Caco-2 (cell line): ENCODE measurements at regions of chr3 and their contacts with region 1.

Region 1: GRCh38 chr3:43759297-43759782 is 68.6 kb downstream of the ABHD5 start:
- DNase-seq: peak; percentile 64 to 80
- H3K4me3 ChIP-seq: no peak overlapping the region
- H3K4me3 Mint-ChIP-seq: peak overlapping the region; percentile 64
- H3K27ac Mint-ChIP-seq: peak overlapping the region; percentile 89
- H3K4me1 ChIP-seq: peaks cover 33% of the 10 kb centered on the region
- H3K4me1 Mint-ChIP-seq: peaks cover 31% of the 10 kb centered on the region
- H3K27me3 ChIP-seq: no peaks in the 10 kb centered on the region
- H3K27me3 Mint-ChIP-seq: no peaks in the 10 kb centered on the region
- CTCF ChIP-seq: peak in 1 of 2 experiments; percentile 27

Region 2: DNA sequence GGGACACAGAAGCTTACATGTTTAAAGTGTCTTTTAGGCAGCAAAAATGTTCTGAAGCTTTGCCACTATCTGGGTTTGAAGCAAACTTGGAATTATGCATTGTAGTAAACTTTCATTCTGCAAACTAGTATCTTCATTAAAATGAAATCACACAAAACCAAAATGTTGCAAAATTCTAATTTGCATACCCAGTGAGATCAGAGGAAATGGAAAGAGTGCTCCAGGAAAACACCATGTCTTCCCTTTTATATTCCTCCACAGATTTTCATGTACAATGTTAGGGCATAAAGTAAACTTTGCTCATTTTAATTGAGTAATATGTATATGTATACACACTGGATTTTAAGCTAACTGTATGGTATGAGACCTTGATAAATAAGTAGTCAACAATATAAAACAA is 161.4 kb before region 1 on chr3:
- CTCF ChIA-PET with region 1: no interaction called
- POLR2A ChIA-PET with region 1: no interaction called
- intact Hi-C with region 1: no loop called
- DNase-seq: no peak
- H3K4me3 ChIP-seq: no peak overlapping the region
- H3K4me3 Mint-ChIP-seq: no peak overlapping the region
- H3K27ac Mint-ChIP-seq: no peak overlapping the region
- H3K4me1 ChIP-seq: no peaks in the 10 kb centered on the region
- H3K4me1 Mint-ChIP-seq: no peaks in the 10 kb centered on the region
- H3K27me3 ChIP-seq: no peaks in the 10 kb centered on the region
- H3K27me3 Mint-ChIP-seq: no peaks in the 10 kb centered on the region
- CTCF ChIP-seq: no peak

Region 3: DNA sequence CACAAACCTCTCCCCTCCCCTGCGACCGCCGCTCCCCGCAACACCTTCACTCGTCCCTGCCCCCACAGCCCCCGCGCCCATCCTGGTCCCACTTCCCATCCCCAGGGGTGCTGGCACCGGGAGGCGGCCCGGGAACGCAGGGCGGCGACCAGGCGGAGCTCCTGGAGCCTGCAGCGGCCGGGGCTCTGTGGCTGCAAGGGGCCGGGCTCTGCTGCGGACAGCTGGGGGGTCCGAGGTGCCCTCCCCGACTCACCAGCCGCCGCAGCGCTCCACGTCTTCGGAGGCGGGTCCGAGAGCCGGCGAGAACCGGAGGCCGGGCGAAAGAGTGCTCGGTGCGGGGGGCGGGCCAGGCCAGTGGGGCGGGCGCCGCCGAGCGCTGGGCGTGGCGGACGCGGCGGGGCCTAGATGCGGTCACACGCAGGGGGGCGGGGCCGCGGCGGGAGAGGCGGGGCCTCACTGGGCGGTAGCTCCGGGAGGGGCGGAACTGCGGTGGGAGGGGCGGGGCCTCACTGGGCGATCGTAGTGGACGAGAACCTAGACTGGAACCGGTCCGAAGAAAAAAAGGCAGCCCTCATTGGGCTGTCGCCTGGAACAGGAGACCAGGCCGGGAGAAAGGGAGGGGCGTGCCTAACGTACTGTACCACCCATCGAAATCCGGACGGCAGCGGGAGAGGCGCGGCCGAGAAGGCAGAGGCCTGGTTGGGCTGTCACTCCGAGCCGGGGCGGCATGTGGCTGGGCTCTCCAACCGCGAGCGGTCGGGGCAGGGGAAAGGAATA is 137.5 kb before region 1 on chr3 and contains the start of gene ANO10:
- CTCF ChIA-PET with region 1: no interaction called
- POLR2A ChIA-PET with region 1: no interaction called
- intact Hi-C with region 1: loop called (anchors 10 kb)
- DNase-seq: peak; percentile 98 to 99
- H3K4me3 ChIP-seq: peak within 1 kb of the TSS; percentile 80
- H3K4me3 Mint-ChIP-seq: peak within 1 kb of the TSS; percentile 95
- H3K27ac Mint-ChIP-seq: peak within 1 kb of the TSS; percentile 88
- H3K4me1 ChIP-seq: no peaks in the 10 kb centered on the region
- H3K4me1 Mint-ChIP-seq: no peaks in the 10 kb centered on the region
- H3K27me3 ChIP-seq: no peaks in the 10 kb centered on the region
- H3K27me3 Mint-ChIP-seq: no peaks in the 10 kb centered on the region
- CTCF ChIP-seq: no peak
- total RNA-seq, gene ANO10: 24.1 and 27.6 TPM in 2 replicates

Region 4: DNA sequence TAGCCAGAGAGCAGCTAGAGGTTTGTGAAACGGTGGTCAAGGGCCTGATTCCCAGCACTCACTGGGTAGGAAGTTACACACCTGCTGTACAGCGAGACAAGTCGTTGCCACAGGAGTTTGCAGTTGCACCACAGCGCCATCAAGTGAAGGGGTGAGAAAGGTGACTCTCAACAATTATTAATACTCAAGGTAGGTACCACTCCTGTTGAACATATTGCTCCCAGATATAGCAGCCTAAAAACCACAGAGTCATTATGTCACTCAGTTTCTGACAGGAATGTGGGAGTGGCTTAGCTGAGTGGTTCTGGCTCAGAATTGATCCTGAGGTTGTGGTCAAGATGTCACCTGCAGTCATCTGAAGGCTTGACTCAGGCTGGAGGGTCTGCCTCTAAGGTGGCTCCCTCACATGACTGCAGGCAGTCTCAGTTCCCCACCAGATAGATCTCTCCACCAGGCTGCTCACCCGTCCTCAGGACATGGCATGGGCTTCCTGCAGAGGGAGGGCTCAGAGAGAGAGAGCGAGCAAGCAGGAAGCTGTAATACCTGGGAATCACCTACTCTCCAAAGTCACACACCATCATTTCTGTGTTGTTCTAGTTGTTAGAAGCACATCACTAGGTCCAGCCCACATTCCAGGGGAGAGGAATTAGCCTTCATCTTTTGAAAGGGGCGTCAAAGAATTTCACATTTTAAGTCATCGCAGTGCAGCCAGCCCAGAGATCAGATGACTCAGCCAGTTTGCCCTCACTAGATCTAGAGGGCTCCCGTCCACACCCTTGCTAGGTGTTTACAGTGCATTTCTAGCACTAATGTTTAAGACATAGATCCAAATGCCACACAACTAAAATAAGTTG is 120.5 kb before region 1 on chr3:
- CTCF ChIA-PET with region 1: no interaction called
- POLR2A ChIA-PET with region 1: no interaction called
- intact Hi-C with region 1: no loop called
- DNase-seq: peak; percentile 45 to 47
- H3K4me3 ChIP-seq: no peak overlapping the region
- H3K4me3 Mint-ChIP-seq: peak overlapping the region; percentile 62
- H3K27ac Mint-ChIP-seq: peak overlapping the region; percentile 35
- H3K4me1 ChIP-seq: peaks cover 10% of the 10 kb centered on the region; the same call in 1 of the 2 replicates
- H3K4me1 Mint-ChIP-seq: peaks cover 6% of the 10 kb centered on the region
- H3K27me3 ChIP-seq: no peaks in the 10 kb centered on the region
- H3K27me3 Mint-ChIP-seq: no peaks in the 10 kb centered on the region
- CTCF ChIP-seq: peak; percentile 11 to 14

Region 5: DNA sequence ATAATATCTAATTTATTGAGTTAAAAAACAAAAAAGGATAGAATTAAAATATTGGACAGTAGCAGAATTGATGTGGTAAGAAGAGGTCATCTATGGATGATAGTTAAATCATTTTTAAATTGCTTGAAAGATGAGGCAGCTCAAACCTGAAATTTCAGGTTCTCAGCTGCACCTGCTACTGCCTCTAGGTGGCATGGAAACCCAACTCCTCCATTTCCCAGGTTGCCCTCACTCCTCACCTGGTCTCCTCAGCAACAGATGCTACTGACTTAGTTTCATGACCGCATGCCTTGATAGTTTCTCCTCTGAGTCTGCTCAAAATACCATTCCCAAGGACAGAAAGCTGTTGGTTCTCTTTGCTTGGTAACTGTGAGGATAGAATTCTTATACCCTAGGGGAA is 79.5 kb after region 1 on chr3:
- CTCF ChIA-PET with region 1: no interaction called
- POLR2A ChIA-PET with region 1: no interaction called
- intact Hi-C with region 1: no loop called
- DNase-seq: no peak
- H3K4me3 ChIP-seq: no peak overlapping the region
- H3K4me3 Mint-ChIP-seq: no peak overlapping the region
- H3K27ac Mint-ChIP-seq: no peak overlapping the region
- H3K4me1 ChIP-seq: no peaks in the 10 kb centered on the region
- H3K4me1 Mint-ChIP-seq: no peaks in the 10 kb centered on the region
- H3K27me3 ChIP-seq: no peaks in the 10 kb centered on the region
- H3K27me3 Mint-ChIP-seq: peaks cover 4% of the 10 kb centered on the region
- CTCF ChIP-seq: peak; percentile 29 to 37